IMR-90 (cell line): ENCODE measurements at regions of chr7 and their contacts with region 1.

Region 1: DNA sequence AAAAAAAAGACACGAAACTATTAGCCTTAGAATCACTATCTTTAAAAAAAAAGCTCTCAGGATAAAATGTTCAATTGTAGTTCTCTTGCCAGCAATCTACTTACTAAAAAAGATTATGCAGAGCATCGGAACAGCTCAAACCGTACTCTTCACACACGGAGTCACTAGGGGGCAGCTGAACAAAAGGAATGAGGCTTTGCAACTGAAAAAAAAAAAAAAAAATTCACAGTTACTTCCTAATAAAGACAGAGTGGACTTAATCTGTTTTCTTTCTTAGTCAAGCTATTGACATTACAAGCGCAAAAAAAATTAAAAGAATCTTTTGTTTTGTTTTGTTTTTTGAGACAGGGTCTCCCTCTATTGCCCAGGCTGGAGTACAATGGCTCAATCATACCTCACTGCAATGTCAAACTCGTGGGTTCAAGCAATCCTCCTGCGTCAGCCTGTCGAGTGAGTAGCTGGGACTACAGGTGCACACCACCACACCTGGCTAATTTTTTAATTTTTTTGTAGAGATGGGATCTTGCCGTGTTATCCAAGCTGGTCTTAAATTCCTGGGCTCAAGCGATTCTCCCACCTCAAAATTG is 11.5 kb downstream of the PMS2 start:
- DNase-seq: peak; percentile 69
- ATAC-seq: peak; percentile 85
- H3K4me3 ChIP-seq: no peak overlapping the region
- H3K27ac ChIP-seq: no peak overlapping the region
- H3K4me1 ChIP-seq: peaks cover 4% of the 10 kb centered on the region
- H3K27me3 ChIP-seq: no peaks in the 10 kb centered on the region
- CTCF ChIP-seq: peak; percentile 74
- POLR2A ChIP-seq: no peak
- RAD21 ChIP-seq: peak; percentile 74

Region 2: GRCh38 chr7:5709347-5709950 is 287.9 kb before region 1 on chr7:
- CTCF ChIA-PET with region 1: no interaction called
- POLR2A ChIA-PET with region 1: no interaction called
- dilution Hi-C with region 1: no loop called
- in situ Hi-C with region 1: no loop called
- intact Hi-C with region 1: no loop called
- DNase-seq: peak; percentile 33
- ATAC-seq: no peak
- H3K4me3 ChIP-seq: no peak overlapping the region
- H3K27ac ChIP-seq: no peak overlapping the region
- H3K4me1 ChIP-seq: no peaks in the 10 kb centered on the region
- H3K27me3 ChIP-seq: no peaks in the 10 kb centered on the region
- CTCF ChIP-seq: no peak
- POLR2A ChIP-seq: no peak
- RAD21 ChIP-seq: no peak

Region 3: GRCh38 chr7:6435486-6436384 is 438.4 kb after region 1 on chr7:
- CTCF ChIA-PET with region 1: no interaction called
- POLR2A ChIA-PET with region 1: no interaction called
- dilution Hi-C with region 1: no loop called
- in situ Hi-C with region 1: no loop called
- intact Hi-C with region 1: loop called (anchors 5 kb)
- DNase-seq: peak; percentile 78
- ATAC-seq: peak; percentile 95
- H3K4me3 ChIP-seq: no peak overlapping the region
- H3K27ac ChIP-seq: peak overlapping the region; percentile 65
- H3K4me1 ChIP-seq: peaks cover 6% of the 10 kb centered on the region; the same call in 1 of the 2 replicates
- H3K27me3 ChIP-seq: no peaks in the 10 kb centered on the region
- CTCF ChIP-seq: peak; percentile 96
- POLR2A ChIP-seq: no peak
- RAD21 ChIP-seq: peak; percentile 72